A549 (cell line): ENCODE measurements at regions of chr10 and their contacts with region 1.

Region 1: DNA sequence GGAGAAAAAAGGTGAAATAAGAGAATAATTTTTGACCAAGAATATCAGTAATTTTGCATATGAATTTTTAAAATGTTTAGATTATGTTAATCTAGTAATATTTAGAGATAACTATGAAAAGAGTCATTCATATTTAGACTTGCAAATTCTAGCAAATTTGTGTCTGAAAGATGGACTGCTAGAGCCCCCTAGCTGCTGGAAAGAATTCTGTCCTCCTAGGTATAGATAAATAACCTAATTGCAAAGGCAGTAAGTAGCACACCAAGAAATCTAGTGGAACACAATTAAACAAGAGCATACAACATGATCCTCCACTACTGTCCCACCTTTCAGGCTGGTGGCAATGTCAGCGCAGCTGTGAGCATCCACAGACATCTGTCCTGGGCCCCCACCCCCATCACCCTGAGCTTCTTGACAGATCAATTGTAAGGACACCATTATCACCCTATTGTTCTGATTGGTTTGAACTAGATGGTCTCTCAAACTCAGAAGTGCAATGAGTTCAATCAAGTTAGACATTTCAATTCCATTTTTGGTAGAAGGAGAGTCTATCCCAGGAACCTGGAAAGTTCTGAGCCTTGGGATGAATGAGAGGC is 15.0 kb upstream of the GFRA1 start:
- DNase-seq: peak; percentile 14 to 50
- ATAC-seq: peak; percentile 54 to 75; a peak in 3 of 6 replicates
- H3K4me3 ChIP-seq: no peak overlapping the region
- H3K27ac ChIP-seq: no peak overlapping the region
- H3K4me1 ChIP-seq: no peaks in the 10 kb centered on the region
- CTCF ChIP-seq: peak; percentile 86
- EP300 ChIP-seq: no peak
- POLR2A ChIP-seq: no peak
- RAD21 ChIP-seq: peak; percentile 88

Region 2: GRCh38 chr10:115432188-115432775 is 855.7 kb before region 1 on chr10:
- CTCF ChIA-PET with region 1: interaction called, 14 read pairs
- POLR2A ChIA-PET with region 1: no interaction called
- DNase-seq: peak; percentile 2 to 29
- ATAC-seq: peak; percentile 47 to 59; a peak in 2 of 6 replicates
- H3K4me3 ChIP-seq: no peak overlapping the region
- H3K27ac ChIP-seq: no peak overlapping the region
- H3K4me1 ChIP-seq: no peaks in the 10 kb centered on the region
- CTCF ChIP-seq: peak; percentile 69
- EP300 ChIP-seq: no peak
- POLR2A ChIP-seq: no peak
- RAD21 ChIP-seq: peak; percentile 74 to 75

Region 3: DNA sequence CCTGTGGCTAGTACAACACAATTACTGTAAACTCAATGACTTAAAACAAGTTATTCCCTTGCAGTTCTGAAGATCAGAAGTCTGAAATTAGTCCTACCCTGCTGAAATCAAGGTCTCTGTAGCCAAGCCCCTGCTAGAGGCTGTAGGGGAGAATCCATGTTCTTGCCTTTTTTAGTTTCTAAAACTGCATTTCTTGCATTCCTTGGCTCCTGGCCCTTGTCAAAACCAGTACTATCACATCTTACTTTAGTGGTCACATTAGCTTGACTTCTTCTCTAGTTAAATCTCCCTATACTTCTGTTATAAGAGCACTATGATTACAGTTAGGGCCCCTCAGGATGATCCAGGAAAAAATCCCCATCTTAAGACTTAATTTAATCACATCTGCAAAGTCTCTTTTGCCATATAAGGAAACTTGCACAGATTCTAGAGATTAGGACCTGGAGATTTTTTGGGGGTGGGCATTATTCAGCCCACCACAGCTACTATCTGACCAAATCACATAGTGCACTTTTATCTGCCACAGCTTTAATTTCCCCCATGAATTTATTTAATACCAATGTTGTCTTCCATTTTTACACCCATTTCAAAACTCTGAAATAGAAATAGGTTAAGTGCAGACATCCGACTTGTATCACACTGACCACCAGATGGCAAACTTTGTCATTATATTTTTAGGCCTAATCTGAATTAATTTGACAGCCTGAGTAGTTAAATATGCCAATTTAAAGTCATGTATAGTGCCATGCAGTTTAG is 581.8 kb before region 1 on chr10:
- CTCF ChIA-PET with region 1: interaction called, 28 read pairs
- POLR2A ChIA-PET with region 1: no interaction called
- DNase-seq: peak in 1 of 2 experiments; percentile 40
- ATAC-seq: peak; percentile 56 to 66; a peak in 3 of 6 replicates
- H3K4me3 ChIP-seq: no peak overlapping the region
- H3K27ac ChIP-seq: no peak overlapping the region
- H3K4me1 ChIP-seq: no peaks in the 10 kb centered on the region
- CTCF ChIP-seq: peak; percentile 76
- EP300 ChIP-seq: no peak
- POLR2A ChIP-seq: no peak
- RAD21 ChIP-seq: peak; percentile 60 to 74

Region 4: DNA sequence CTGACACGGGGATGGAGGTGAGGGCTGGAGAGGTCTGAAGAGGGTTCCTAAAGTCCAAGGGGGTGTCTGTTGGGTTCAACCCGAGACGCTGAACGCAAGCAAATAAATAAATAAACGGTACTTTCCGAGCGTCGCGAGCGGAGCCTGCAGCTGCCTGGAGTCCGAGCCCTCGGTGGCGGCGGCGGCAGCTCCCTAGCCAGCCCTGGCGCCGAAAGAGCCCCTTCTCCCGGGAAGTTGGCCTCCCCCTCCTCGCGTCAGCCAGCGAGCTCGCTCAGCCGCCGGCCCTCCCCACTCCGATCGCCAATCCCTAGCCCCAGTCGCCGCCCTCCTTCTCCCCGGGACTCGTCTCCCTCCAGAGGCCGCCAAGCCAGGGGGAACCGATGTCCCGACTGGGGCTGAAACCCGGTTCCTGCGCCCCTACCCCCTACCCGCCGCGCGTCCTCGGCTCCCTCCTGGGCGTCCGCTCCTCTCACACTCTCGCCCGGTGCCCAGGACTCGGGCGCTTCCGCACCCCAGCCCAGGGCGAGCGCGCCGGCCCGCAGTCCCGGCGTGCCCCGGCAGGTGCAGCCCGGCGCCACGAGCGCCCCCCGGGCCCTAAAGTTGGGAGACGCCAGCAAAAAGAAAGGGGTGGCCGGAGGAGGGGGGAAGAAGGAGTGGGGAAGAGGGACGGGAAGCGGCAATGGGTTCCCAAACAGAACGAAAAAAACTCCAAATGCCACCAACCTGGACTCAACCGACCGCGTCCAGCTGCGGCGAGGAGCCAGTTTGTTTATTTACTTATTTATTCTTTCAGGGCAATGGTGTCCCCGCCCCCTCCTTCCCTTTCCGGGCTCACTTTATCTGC is 15.3 kb before region 1 on chr10 and contains the start of gene GFRA1:
- CTCF ChIA-PET with region 1: interaction called, 14 read pairs
- POLR2A ChIA-PET with region 1: no interaction called
- DNase-seq: peak; percentile 21 to 65
- ATAC-seq: peak; percentile 71 to 74
- H3K4me3 ChIP-seq: peak within 1 kb of the TSS; percentile 68
- H3K27ac ChIP-seq: peak within 1 kb of the TSS; percentile 57 to 85
- H3K4me1 ChIP-seq: peaks cover 7% of the 10 kb centered on the region; the same call in 1 of the 3 replicates
- CTCF ChIP-seq: peak; percentile 21; the same call in 2 of the 3 replicates
- EP300 ChIP-seq: no peak
- POLR2A ChIP-seq: no peak
- RAD21 ChIP-seq: no peak
- polyA plus RNA-seq, gene GFRA1: 4.0 and 4.2 TPM in 2 replicates